Activated naive CD4-positive, alpha-beta T cell treated with anti-CD3 and anti-CD28 coated beads for 36 hours (primary cell): ENCODE measurements at regions of chr5 and their contacts with region 1.

Region 1: DNA sequence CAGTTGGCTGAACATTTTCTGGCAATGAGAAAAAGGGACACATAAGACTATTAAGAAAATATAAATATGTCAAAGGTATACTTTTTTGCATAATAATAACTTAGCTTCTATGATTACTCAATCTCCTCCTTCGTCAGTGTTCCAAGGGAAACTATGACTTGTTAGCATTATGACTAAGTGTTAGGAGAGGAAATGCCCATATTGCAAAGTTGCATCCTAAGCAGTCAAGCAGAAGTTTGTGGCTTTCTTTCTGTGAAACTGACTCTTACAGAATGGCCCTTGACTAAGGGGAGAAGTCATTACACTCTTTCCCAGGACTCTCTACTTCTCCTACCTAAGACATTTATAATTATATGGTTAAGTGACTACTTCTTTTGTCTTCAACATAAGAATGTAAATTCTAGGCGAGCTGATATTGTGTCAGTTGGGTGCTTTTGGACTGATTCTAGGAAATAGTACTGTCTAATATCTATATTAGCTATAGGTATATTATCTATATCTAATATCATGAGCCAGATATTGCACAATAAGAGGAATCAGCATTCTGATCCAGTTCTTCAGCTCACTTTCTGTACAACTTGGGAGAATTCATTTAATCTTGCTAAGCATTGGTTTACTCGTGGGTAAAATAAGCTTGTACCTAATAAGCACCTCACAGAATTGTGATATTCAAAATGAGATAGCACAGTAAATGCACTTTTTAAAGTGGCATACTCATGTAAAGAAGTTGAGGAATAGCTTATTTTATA is 16.4 kb upstream of the SPINK6 start:
- DNase-seq: peak; percentile 9
- H3K4me3 Mint-ChIP-seq: no peak overlapping the region
- H3K27ac Mint-ChIP-seq: no peak overlapping the region
- H3K4me1 Mint-ChIP-seq: peaks cover 2% of the 10 kb centered on the region
- H3K27me3 Mint-ChIP-seq: peaks cover 10% of the 10 kb centered on the region

Region 2: DNA sequence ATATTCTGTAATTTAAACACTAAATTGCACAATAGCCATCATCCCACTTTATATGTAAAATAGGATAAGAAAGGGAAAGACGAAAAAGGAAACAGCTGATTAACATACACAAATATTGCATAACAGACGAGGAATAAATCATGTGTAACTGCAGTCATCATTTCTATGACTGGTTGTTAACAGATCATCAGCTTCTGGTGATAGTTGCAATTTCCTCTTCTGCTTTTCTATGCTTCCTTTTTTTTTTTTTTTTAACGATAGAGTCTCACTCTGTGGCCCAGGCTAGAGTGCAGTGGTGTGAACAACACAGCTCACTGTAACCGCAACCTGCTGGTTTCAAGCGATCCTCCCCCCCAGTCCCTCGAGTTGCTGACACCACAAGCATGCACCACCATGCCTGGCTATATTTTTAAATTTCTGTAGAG is 381.4 kb before region 1 on chr5:
- CTCF ChIA-PET with region 1: no interaction called
- intact Hi-C with region 1: no loop called
- DNase-seq: no peak
- H3K4me3 Mint-ChIP-seq: no peak overlapping the region
- H3K27ac Mint-ChIP-seq: no peak overlapping the region
- H3K4me1 Mint-ChIP-seq: no peaks in the 10 kb centered on the region
- H3K27me3 Mint-ChIP-seq: peaks cover 3% of the 10 kb centered on the region

Region 3: GRCh38 chr5:148374692-148375360 is 188.4 kb after region 1 on chr5:
- CTCF ChIA-PET with region 1: no interaction called
- intact Hi-C with region 1: loop called (anchors 2 kb)
- DNase-seq: peak; percentile 29
- H3K4me3 Mint-ChIP-seq: no peak overlapping the region
- H3K27ac Mint-ChIP-seq: no peak overlapping the region
- H3K4me1 Mint-ChIP-seq: peaks cover 6% of the 10 kb centered on the region
- H3K27me3 Mint-ChIP-seq: no peaks in the 10 kb centered on the region

Region 4: GRCh38 chr5:148403344-148403743 is 216.9 kb after region 1 on chr5:
- CTCF ChIA-PET with region 1: no interaction called
- intact Hi-C with region 1: loop called (anchors 1 kb)
- DNase-seq: no peak
- H3K4me3 Mint-ChIP-seq: no peak overlapping the region
- H3K27ac Mint-ChIP-seq: no peak overlapping the region
- H3K4me1 Mint-ChIP-seq: peaks cover 39% of the 10 kb centered on the region
- H3K27me3 Mint-ChIP-seq: no peaks in the 10 kb centered on the region

Region 5: GRCh38 chr5:148708854-148709253 is 522.4 kb after region 1 on chr5:
- CTCF ChIA-PET with region 1: no interaction called
- intact Hi-C with region 1: loop called (anchors 1 kb)
- DNase-seq: peak; percentile 33
- H3K4me3 Mint-ChIP-seq: no peak overlapping the region
- H3K27ac Mint-ChIP-seq: no peak overlapping the region
- H3K4me1 Mint-ChIP-seq: peaks cover 13% of the 10 kb centered on the region
- H3K27me3 Mint-ChIP-seq: peaks cover 19% of the 10 kb centered on the region